ENCODE measurements at regions of chr6 and their contacts with region 1.

Region 1: DNA sequence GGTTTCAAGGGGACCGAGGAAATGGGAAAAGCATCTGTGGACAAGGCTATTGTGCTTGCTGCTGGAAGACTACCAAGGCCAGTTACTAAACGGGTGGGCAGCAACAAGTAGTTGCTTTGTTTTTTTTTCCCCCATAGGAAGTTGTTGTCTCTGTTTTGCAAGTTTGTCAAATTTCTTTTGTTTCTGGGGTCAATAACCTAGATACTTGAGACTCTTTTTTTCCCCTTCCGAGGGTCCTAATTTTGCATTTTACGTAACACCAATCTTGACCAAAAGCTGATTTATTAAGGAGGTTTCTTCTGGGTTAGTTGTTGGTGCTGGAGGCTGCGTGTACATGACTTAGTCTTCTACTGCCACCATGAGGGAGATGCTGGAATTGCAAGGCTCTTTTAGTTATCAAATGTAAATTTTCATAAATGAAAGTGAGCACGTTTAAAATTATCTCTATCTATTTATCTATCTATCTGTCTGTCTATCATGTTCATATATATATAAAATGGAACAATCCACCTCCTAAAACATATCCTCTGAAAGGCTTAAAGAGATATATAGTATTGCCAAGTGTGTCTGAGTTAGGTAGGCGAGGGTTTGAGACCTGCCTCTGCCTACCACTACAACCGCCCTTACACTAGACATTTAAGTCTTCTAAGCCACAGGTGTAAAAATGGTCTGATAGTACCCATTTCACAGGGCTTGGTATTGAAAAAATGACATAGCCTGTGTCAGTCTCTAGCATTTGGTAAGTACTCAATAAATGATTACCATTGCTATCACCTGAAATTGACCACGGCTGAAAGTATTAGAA is 60.2 kb downstream of the GCLC start:
- DNase-seq: no peak
- ATAC-seq: peak; percentile 65
- H3K4me3 ChIP-seq: no peak overlapping the region
- H3K27ac ChIP-seq: no peak overlapping the region
- H3K4me1 ChIP-seq: no peaks in the 10 kb centered on the region
- H3K27me3 ChIP-seq: no peaks in the 10 kb centered on the region
- CTCF ChIP-seq: peak; percentile 88 to 98 (median 96); a peak in 5 of 6 replicates
- EP300 ChIP-seq: no peak
- POLR2A ChIP-seq: no peak
- RAD21 ChIP-seq: peak; percentile 99

Region 2: DNA sequence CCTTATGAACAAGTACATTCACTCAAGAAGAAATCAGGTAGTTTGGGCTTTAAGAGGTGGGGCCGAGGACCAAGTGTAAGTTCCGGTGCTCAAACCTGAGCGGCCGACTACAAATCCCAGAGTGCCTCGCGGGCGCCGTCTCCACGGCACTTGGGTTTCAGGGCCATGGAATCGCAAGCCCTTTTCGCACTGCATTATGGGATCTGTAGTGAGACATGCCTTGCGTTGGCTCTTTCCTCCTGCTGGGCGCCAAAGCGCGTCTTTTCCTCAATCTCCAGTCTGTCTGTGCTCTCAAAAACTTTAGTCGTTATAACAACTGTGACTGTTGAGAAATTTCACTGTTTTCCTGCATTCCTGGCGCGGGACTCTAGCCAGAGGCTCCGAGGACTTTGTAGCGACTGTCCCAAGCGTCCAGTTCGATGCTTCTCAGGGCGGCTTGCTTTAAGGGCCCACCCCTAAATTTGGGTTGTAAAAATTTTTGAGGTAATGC is 419.9 kb before region 1 on chr6:
- CTCF ChIA-PET with region 1: interaction called, 22 read pairs
- POLR2A ChIA-PET with region 1: no interaction called
- RAD21 ChIA-PET with region 1: interaction called, 12 read pairs
- SMC1A ChIA-PET with region 1: interaction called, 8 read pairs
- in situ Hi-C with region 1: no loop called
- intact Hi-C with region 1: loop called (anchors 2 kb)
- DNase-seq: peak; percentile 91
- ATAC-seq: peak; percentile 81
- H3K4me3 ChIP-seq: peak overlapping the region; percentile 85
- H3K27ac ChIP-seq: peak overlapping the region; percentile 78
- H3K4me1 ChIP-seq: peaks cover 9% of the 10 kb centered on the region; the same call in 1 of the 2 replicates
- H3K27me3 ChIP-seq: no peaks in the 10 kb centered on the region
- CTCF ChIP-seq: 0 out of 6 replicates have a peak, but pooled peaks of 1 of the 3 experiments have one; percentile 4
- EP300 ChIP-seq: no peak
- POLR2A ChIP-seq: no peak
- RAD21 ChIP-seq: no peak

Region 3: DNA sequence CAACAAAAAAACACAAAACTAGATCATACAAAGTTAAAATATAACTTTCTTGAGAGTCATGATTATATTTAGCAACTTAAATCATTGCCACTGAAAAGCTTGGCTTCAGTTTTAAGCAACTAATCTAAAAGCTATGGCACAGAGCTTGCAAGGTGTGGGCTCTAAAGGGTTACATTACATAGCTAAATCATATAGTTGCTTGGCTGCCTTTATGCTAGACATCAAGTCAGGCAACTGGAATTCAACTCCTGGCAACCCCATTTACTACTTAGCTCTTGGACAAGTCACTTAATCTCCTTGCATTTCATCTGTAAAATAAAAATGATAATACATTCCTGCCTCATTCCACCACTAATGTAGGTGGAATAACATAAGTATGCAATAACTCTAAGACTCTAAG is 295.1 kb before region 1 on chr6:
- CTCF ChIA-PET with region 1: interaction called, 18 read pairs
- POLR2A ChIA-PET with region 1: no interaction called
- RAD21 ChIA-PET with region 1: interaction called, 5 read pairs
- SMC1A ChIA-PET with region 1: interaction called, 16 read pairs
- in situ Hi-C with region 1: no loop called
- intact Hi-C with region 1: no loop called
- DNase-seq: no peak
- ATAC-seq: peak; percentile 20; the same call in 2 of the 3 replicates
- H3K4me3 ChIP-seq: no peak overlapping the region
- H3K27ac ChIP-seq: no peak overlapping the region
- H3K4me1 ChIP-seq: no peaks in the 10 kb centered on the region; the same call in 1 of the 2 replicates
- H3K27me3 ChIP-seq: no peaks in the 10 kb centered on the region
- CTCF ChIP-seq: no peak
- EP300 ChIP-seq: no peak
- POLR2A ChIP-seq: no peak
- RAD21 ChIP-seq: no peak

Region 4: DNA sequence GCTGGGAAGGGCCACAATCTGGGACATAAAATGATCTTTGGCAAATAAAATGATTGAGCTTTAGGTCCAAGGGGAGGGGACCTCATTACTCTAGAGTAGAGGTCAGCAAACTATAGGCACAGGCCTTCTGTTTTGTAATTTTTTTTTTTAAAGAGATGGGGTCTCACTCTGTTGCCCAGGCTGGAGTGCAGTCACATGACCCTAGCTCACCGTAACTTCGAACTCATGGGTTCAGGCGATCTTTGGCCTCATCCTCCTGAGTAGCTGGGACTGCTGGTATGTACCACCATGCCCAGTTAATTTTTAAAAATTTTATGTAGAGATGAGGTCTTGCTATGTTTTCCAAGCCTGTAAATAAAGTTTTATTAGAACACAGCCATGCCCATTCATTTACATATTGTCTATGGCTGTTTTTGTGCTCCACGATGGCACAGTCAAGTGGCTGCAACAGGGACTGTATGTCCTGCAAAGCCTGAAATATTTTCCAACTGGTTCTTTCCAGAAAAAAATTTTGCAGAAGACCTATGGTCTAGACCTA is 218.1 kb before region 1 on chr6:
- CTCF ChIA-PET with region 1: no interaction called
- POLR2A ChIA-PET with region 1: no interaction called
- RAD21 ChIA-PET with region 1: no interaction called
- SMC1A ChIA-PET with region 1: no interaction called
- in situ Hi-C with region 1: no loop called
- intact Hi-C with region 1: no loop called
- DNase-seq: no peak
- ATAC-seq: no peak
- H3K4me3 ChIP-seq: no peak overlapping the region
- H3K27ac ChIP-seq: no peak overlapping the region
- H3K4me1 ChIP-seq: no peaks in the 10 kb centered on the region
- H3K27me3 ChIP-seq: no peaks in the 10 kb centered on the region
- CTCF ChIP-seq: no peak
- EP300 ChIP-seq: no peak
- POLR2A ChIP-seq: no peak
- RAD21 ChIP-seq: no peak

Region 5: DNA sequence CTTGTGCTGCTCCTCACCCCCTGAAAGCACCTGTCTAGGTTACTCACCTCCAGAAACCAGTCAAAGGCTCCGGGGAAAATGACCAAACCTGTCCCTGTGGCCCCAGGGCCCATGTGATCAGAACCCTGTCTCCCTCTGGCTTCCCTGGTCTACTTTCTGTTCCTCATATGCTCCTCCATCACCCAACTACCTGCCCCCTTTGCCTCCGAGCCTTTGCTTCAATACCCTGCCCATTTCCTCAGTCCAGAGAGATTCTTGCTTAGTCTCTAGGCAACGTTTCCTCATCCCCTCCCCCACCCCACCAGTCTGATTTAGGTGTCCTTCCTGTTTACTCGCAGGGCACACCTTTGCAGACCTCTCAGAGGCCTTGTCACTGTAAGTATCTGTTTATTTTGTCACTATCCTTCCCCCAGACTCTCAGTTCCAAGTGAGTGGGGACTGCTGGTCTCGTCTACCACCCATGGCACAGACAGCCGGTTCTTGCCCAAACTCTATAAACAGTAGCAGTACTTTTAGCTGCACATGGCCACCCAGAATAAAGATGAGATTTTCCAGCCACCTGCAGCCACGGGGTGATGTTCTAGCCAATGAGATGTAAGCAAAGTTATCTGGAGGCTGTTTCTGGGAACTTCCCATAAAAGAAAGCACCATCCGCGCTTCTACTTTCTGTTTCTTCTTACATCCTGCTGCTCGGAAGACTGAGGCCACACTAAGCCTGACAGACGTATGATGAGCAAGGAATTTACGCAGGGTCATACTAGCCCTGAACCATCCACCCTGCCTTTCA is 149.3 kb before region 1 on chr6:
- CTCF ChIA-PET with region 1: interaction called, 4 read pairs
- POLR2A ChIA-PET with region 1: no interaction called
- RAD21 ChIA-PET with region 1: interaction called, 3 read pairs
- SMC1A ChIA-PET with region 1: interaction called, 6 read pairs
- in situ Hi-C with region 1: no loop called
- intact Hi-C with region 1: loop called (anchors 5 kb)
- DNase-seq: peak; percentile 88
- ATAC-seq: peak; percentile 90
- H3K4me3 ChIP-seq: peak overlapping the region; percentile 72
- H3K27ac ChIP-seq: peak overlapping the region; percentile 85
- H3K4me1 ChIP-seq: peaks cover 22% of the 10 kb centered on the region
- H3K27me3 ChIP-seq: no peaks in the 10 kb centered on the region
- CTCF ChIP-seq: no peak
- EP300 ChIP-seq: peak in 1 of 2 experiments; percentile 68; a peak in 2 of 4 replicates
- POLR2A ChIP-seq: peak; percentile 34; the same call in 1 of the 2 replicates
- RAD21 ChIP-seq: no peak

Region 6: DNA sequence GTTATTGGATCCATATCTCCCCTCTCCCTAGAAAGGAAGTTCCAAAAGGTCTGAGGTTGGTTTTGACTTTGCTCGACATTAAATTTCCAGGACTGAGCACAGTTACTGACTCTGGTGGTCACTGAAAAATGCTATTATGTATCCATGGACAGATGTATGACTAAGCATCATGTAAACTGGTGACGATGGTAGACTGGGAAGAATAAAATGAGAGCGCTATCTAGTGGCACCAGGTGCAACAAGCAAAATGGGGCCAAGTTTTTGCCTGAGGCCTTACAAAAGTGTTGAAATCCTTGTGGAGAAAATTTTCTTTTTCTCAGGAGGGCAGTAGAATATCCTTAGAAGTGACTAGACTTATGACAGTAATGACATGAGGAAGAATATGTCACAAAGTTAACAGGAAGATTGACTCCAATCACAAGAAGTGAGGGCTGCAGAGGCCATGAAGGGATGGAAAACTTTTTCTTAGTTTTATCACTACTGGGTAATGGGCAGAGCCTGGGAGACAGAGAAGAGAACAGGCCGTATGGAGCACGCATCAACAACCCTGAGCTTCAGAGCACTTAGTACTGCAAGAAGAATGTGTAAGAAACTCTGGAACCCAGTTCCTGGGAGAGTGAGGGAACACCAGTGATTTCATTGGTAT is 47.0 kb before region 1 on chr6:
- CTCF ChIA-PET with region 1: interaction called, 164 read pairs
- POLR2A ChIA-PET with region 1: interaction called, 4 read pairs
- RAD21 ChIA-PET with region 1: interaction called, 51 read pairs
- SMC1A ChIA-PET with region 1: interaction called, 111 read pairs
- in situ Hi-C with region 1: no loop called
- intact Hi-C with region 1: loop called (anchors 1 kb)
- DNase-seq: peak; percentile 27
- ATAC-seq: peak; percentile 69
- H3K4me3 ChIP-seq: no peak overlapping the region
- H3K27ac ChIP-seq: no peak overlapping the region
- H3K4me1 ChIP-seq: peaks cover 4% of the 10 kb centered on the region; the same call in 1 of the 2 replicates
- H3K27me3 ChIP-seq: peaks cover 0 to 5% of the 10 kb centered on the region in 2 experiments; a peak in 1 of 4 replicates
- CTCF ChIP-seq: peak; percentile 64 to 77 (median 67)
- EP300 ChIP-seq: no peak
- POLR2A ChIP-seq: no peak
- RAD21 ChIP-seq: peak; percentile 90

Region 7: GRCh38 chr6:53469163-53469562 is 15.5 kb before region 1 on chr6:
- CTCF ChIA-PET with region 1: interaction called, 47 read pairs
- POLR2A ChIA-PET with region 1: no interaction called
- RAD21 ChIA-PET with region 1: interaction called, 4 read pairs
- SMC1A ChIA-PET with region 1: interaction called, 194 read pairs
- in situ Hi-C with region 1: no loop called
- intact Hi-C with region 1: no loop called
- DNase-seq: no peak
- ATAC-seq: no peak
- H3K4me3 ChIP-seq: no peak overlapping the region
- H3K27ac ChIP-seq: no peak overlapping the region
- H3K4me1 ChIP-seq: no peaks in the 10 kb centered on the region
- H3K27me3 ChIP-seq: no peaks in the 10 kb centered on the region
- CTCF ChIP-seq: no peak
- EP300 ChIP-seq: no peak
- POLR2A ChIP-seq: no peak
- RAD21 ChIP-seq: no peak

Region 8: DNA sequence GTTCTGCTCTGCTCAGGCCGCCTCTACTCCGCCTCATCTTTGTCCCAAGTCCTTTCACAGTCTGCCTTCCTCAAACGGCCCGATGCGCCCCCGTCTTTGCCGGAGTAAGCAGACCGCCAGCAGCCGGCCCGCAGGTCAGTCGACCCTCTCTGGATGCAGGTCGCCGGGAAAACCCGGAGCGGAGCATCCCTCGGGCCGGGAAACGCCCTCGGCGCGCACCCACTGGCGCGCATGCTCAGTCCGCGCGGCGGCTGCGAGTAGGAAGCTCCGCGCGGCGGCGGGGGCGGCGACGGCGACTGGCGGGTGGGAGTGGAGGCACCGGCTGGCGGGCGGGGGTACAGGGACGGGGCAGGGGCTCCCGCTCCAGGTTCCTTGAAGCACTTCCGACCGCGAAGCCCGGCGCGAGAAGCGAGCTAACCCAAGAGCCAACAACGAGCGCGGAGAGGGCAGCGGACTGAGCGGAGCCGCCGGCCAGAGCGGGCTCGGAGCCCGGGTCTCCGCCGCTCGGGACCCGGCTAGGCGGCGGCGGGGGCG is 310.1 kb after region 1 on chr6 and contains the start of gene LRRC1:
- CTCF ChIA-PET with region 1: no interaction called
- POLR2A ChIA-PET with region 1: no interaction called
- RAD21 ChIA-PET with region 1: no interaction called
- SMC1A ChIA-PET with region 1: no interaction called
- in situ Hi-C with region 1: no loop called
- intact Hi-C with region 1: no loop called
- DNase-seq: peak; percentile 44
- ATAC-seq: peak; percentile 78
- H3K4me3 ChIP-seq: peak within 1 kb of the TSS; percentile 72
- H3K27ac ChIP-seq: no peak within 1 kb of the TSS
- H3K4me1 ChIP-seq: peaks cover 7% of the 10 kb centered on the region; the same call in 1 of the 2 replicates
- H3K27me3 ChIP-seq: peaks cover 0 to 5% of the 10 kb centered on the region in 2 experiments; a peak in 1 of 4 replicates
- CTCF ChIP-seq: no peak
- EP300 ChIP-seq: no peak
- POLR2A ChIP-seq: peak; percentile 71
- RAD21 ChIP-seq: no peak
- polyA plus RNA-seq, gene LRRC1: 0.35 to 0.89 TPM

Measured in GM12878 (cell line).